ENCODE measurements at regions of chr17 and their contacts with region 1.

Region 1: GRCh38 chr17:64129764-64130558 is at the start of gene ERN1:
- DNase-seq: peak; percentile 92
- ATAC-seq: peak; percentile 92
- H3K4me3 Mint-ChIP-seq: peak within 1 kb of the TSS; percentile 82
- H3K27ac Mint-ChIP-seq: peak within 1 kb of the TSS; percentile 89
- H3K4me1 Mint-ChIP-seq: peaks cover 41% of the 10 kb centered on the region
- H3K27me3 Mint-ChIP-seq: no peaks in the 10 kb centered on the region
- total RNA-seq, gene ERN1: 21.7 to 22.9 TPM

Region 2: DNA sequence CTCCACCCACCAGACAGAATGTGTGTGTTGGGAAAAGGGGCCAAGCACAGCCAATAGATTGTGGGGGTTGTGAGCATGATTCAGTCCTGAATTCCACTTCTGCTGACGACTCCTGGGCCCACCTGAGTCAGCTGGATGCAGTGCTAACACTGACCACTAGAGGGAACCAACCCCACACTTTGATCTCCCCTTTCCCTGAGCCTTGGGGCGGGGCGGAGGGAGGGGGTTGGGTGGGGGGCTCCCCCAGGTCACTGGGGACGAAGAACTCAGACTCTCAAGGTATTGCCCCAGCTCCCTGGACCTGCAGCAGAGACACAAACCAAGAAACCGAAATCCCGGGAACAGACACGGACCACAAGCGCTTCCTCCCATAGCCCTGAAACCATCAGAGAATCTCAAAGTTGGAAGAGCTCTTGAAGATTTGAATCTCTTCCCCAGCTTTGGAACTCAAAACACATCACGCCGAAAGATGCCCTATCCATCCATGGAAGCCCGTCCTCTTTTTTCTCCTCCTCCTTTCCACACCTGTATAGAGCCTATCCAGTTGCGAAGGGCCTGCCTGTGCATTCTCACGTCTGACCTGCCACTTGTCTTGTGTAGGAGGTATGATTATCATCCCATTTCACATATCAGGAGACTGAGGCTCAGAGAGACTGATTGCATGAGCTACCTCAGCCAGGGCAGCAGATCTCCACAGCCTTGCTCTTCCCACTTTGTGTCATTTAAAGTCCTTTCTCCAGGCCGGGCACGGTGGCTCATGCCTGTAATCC is 218.1 kb before region 1 on chr17:
- CTCF ChIA-PET with region 1: interaction called, 79 read pairs
- DNase-seq: peak; percentile 73
- ATAC-seq: peak; percentile 65
- H3K4me3 Mint-ChIP-seq: no peak overlapping the region
- H3K27ac Mint-ChIP-seq: no peak overlapping the region
- H3K4me1 Mint-ChIP-seq: no peaks in the 10 kb centered on the region
- H3K27me3 Mint-ChIP-seq: peaks cover 31% of the 10 kb centered on the region

Region 3: DNA sequence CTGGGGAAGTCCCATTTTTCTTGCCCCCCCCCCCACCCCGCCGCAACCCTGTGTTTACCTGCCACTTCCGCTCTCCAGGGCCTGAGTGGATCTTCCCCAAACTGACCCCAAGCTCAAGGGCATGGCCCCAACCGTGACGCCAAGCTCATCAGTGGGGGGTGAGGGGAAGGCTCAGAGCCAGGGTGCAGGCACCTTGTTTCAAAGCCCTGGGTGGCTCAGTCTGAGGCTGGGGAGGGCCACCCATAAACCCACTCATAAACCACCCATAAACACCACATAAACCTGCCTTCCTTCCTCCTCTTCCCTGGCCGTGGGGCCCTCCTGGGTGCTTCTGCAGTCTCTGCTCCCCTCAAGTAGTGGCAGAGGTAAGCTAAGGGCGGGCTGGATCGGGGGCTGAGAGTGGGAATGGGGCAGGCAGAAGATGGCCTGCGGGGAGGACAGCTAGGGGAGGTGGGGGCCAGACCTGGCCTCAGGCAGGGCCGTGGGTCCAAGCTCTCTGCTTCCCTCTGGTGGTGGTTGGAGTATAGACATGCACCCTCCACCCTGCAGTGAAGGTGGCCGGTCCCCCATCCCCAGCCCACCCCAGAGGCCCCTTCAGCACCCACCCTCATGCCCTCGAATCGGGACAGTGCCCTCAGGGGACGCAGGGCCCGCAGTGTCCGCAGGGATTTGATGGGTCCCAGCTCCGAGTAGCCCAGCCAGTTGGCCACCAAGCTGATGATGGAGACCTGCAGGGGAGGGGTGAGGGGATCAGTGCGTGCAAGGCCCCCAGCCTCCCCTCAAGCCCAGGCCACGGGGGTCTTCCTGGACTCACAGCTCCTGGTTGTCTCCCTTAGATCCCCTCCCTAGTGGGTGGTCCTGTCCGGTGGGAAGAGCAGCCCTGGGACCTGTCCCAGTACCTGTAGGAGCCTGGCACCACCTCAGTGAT is 183.3 kb before region 1 on chr17:
- CTCF ChIA-PET with region 1: interaction called, 15 read pairs
- DNase-seq: peak; percentile 79
- ATAC-seq: peak; percentile 85
- H3K4me3 Mint-ChIP-seq: peak overlapping the region; percentile 39
- H3K27ac Mint-ChIP-seq: peak overlapping the region; percentile 62
- H3K4me1 Mint-ChIP-seq: peaks cover 19% of the 10 kb centered on the region
- H3K27me3 Mint-ChIP-seq: peaks cover 21% of the 10 kb centered on the region

Region 4: GRCh38 chr17:64020056-64020766 is 109.8 kb before region 1 on chr17 and contains the start of gene ICAM2:
- CTCF ChIA-PET with region 1: interaction called, 488 read pairs
- DNase-seq: peak; percentile 97
- ATAC-seq: peak; percentile 75
- H3K4me3 Mint-ChIP-seq: peak within 1 kb of the TSS; percentile 92
- H3K27ac Mint-ChIP-seq: peak within 1 kb of the TSS; percentile 98
- H3K4me1 Mint-ChIP-seq: peaks cover 73% of the 10 kb centered on the region
- H3K27me3 Mint-ChIP-seq: no peaks in the 10 kb centered on the region
- total RNA-seq, gene ICAM2: 39.0 to 40.6 TPM

Region 5: GRCh38 chr17:64056269-64057005 is 73.5 kb before region 1 on chr17:
- CTCF ChIA-PET with region 1: interaction called, 87 read pairs
- DNase-seq: no peak
- ATAC-seq: no peak
- H3K4me3 Mint-ChIP-seq: no peak overlapping the region
- H3K27ac Mint-ChIP-seq: peak overlapping the region; percentile 65
- H3K4me1 Mint-ChIP-seq: peaks cover 38% of the 10 kb centered on the region
- H3K27me3 Mint-ChIP-seq: no peaks in the 10 kb centered on the region

Region 6: GRCh38 chr17:64081802-64082799 is 47.9 kb before region 1 on chr17:
- CTCF ChIA-PET with region 1: interaction called, 20 read pairs
- DNase-seq: peak; percentile 84
- ATAC-seq: peak; percentile 91
- H3K4me3 Mint-ChIP-seq: peak overlapping the region; percentile 16
- H3K27ac Mint-ChIP-seq: peak overlapping the region; percentile 83
- H3K4me1 Mint-ChIP-seq: peaks cover 11% of the 10 kb centered on the region
- H3K27me3 Mint-ChIP-seq: no peaks in the 10 kb centered on the region

Region 7: GRCh38 chr17:64291254-64291851 is 161.4 kb after region 1 on chr17:
- CTCF ChIA-PET with region 1: interaction called, 10 read pairs
- DNase-seq: no peak
- ATAC-seq: no peak
- H3K4me3 Mint-ChIP-seq: no peak overlapping the region
- H3K27ac Mint-ChIP-seq: no peak overlapping the region
- H3K4me1 Mint-ChIP-seq: no peaks in the 10 kb centered on the region
- H3K27me3 Mint-ChIP-seq: peaks cover 3% of the 10 kb centered on the region

Region 8: GRCh38 chr17:64420143-64420971 is 290.4 kb after region 1 on chr17:
- CTCF ChIA-PET with region 1: no interaction called
- DNase-seq: peak; percentile 46
- ATAC-seq: peak; percentile 81
- H3K4me3 Mint-ChIP-seq: no peak overlapping the region
- H3K27ac Mint-ChIP-seq: no peak overlapping the region
- H3K4me1 Mint-ChIP-seq: peaks cover 9% of the 10 kb centered on the region
- H3K27me3 Mint-ChIP-seq: peaks cover 11% of the 10 kb centered on the region

Measured in activated CD8-positive, alpha-beta memory T cell treated with anti-CD3 and anti-CD28 coated beads, Interleukin-2, amount 10 ng/mL, durations not matched to agents 7 days and 5 days (primary cell).